T-cell (primary cell): ENCODE measurements at regions of chr3 and their contacts with region 1.

Region 1: DNA sequence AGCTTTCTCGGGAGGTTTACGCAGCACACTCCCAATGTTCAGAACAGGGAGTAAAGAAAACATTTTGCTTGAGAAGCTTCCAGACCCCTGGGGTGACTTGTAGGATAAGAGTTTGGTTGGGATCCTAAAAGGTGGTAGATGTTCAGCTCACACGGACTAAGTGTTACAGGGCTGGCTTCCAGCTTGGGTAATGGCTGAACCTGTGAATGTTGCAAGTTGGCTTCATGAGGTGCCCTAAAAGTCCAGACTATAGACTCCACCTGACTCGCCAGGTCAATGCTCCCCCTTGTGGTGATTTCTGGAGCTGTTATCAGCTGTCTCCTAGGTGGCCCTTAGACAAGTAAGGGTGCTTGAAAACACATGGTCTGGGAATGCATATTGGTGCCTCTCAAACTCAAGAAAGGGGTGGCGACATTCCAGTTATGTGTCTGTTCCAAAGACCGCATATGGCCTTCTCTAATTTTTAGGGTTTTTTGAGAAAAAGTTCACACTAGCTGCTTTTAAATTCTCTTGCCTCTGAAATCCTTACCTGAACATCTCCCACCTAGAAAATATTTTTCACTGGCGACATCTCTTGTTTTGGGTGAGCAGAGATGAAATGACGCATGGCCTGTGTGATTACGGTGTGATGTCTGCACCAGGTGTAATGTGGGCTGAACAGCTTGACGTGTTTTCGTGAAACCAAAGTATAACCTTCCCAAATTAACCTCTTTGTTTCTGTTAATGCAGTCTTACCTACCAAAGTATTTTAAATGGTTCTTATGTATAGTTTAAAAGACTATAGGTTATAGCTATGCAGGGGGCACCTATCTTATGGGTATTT is 175.7 kb upstream of the KBTBD8 start:
- DNase-seq: peak; percentile 8 to 78 (median 53)
- ATAC-seq: peak; percentile 56 to 76 (median 68)
- H3K4me3 ChIP-seq: no peak overlapping the region
- H3K4me3 Mint-ChIP-seq: no peak overlapping the region
- H3K27ac ChIP-seq: no peak overlapping the region
- H3K27ac Mint-ChIP-seq: no peak overlapping the region
- H3K4me1 ChIP-seq: no peaks in the 10 kb centered on the region
- H3K4me1 Mint-ChIP-seq: no peaks in the 10 kb centered on the region
- H3K27me3 ChIP-seq: peaks cover 0 to 3% of the 10 kb centered on the region in 2 experiments
- H3K27me3 Mint-ChIP-seq: peaks cover 0 to 6% of the 10 kb centered on the region in 2 donors

Region 2: DNA sequence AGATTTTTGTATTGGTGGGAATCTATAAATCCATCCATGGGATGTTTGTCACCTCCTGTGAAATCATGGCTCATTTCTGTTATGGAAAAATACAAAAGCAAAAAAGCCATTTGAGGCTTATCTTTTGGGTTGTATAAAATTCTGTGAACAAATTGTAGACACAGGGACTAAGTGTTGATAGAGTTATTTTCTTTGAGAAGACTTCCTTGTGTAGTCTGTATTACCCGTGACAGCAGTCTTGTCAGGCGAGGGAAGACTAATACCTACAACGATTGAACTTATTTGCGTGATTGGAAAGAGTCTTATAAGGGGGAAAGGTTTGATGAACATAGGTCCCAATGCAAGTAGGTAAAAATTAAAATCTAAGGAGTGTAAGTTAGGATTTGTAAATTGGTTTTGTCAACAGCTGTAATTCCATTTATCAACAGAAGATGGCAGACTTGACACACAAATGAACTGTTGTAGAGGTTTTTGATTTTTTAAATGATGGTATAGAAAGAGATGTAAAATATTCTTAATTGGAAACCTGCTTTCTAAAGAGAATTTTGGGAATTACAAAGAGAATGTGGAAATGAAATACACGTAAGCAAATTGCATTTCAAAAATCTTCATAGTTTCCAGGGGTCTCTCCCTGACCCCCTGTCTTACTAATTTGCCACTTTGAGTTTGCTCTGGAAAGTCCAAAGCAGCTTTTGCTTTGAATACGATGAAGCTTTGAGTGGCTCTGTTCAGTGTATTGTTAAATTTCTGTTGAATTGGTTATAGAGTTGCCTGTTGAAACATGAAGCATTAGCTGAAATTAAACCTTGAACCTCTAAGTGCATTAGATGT is 568.4 kb before region 1 on chr3:
- CTCF ChIA-PET with region 1: interaction called, 39 to 67 read pairs
- POLR2A ChIA-PET with region 1: interaction called in 1 of 2 experiments, 5 read pairs
- DNase-seq: peak in 2 of 35 experiments; percentile 13 to 65
- ATAC-seq: no peak
- H3K4me3 ChIP-seq: no peak overlapping the region
- H3K4me3 Mint-ChIP-seq: no peak overlapping the region
- H3K27ac ChIP-seq: no peak overlapping the region
- H3K27ac Mint-ChIP-seq: no peak overlapping the region
- H3K4me1 ChIP-seq: no peaks in the 10 kb centered on the region
- H3K4me1 Mint-ChIP-seq: no peaks in the 10 kb centered on the region
- H3K27me3 ChIP-seq: no peaks in the 10 kb centered on the region
- H3K27me3 Mint-ChIP-seq: no peaks in the 10 kb centered on the region

Region 3: DNA sequence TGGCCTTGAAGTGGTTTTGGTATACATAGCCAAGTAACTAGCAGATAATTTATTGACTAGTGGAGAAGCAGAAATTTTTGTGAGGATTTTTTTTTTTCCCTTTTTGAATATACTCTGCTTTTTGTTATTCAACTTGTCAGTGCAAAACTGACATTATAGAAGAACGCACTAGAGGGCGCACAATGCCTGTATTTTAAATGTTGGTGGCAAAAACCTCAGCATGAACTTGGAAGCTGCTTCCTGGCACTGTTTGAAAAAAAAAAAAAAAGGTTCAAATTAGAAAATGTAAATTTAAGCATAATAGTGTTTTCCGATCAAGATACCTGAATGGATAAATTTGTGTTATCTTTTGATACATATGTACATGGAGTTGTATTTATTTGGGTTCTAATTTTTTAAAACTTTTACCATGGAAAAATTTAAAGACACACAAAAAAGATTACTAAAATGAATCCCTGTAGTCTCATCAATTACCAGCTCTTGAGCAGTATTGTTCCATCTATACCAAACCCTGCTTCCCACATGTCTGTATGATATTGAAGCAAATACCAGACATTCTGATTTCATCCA is 545.6 kb before region 1 on chr3:
- CTCF ChIA-PET with region 1: interaction called, 8 to 11 read pairs
- POLR2A ChIA-PET with region 1: no interaction called
- DNase-seq: peak in 34 of 35 experiments; percentile 11 to 84 (median 54)
- ATAC-seq: peak in 3 of 4 experiments; percentile 40 to 61 (median 54)
- H3K4me3 ChIP-seq: no peak overlapping the region
- H3K4me3 Mint-ChIP-seq: no peak overlapping the region
- H3K27ac ChIP-seq: no peak overlapping the region
- H3K27ac Mint-ChIP-seq: peak overlapping the region; percentile 49 to 74
- H3K4me1 ChIP-seq: peaks cover 3 to 9% of the 10 kb centered on the region in 2 experiments
- H3K4me1 Mint-ChIP-seq: peaks cover 35 to 43% (median 40%) of the 10 kb centered on the region in 3 donors
- H3K27me3 ChIP-seq: no peaks in the 10 kb centered on the region
- H3K27me3 Mint-ChIP-seq: no peaks in the 10 kb centered on the region

Region 4: GRCh38 chr3:66407611-66408218 is 414.7 kb before region 1 on chr3:
- CTCF ChIA-PET with region 1: interaction called, 13 to 14 read pairs
- POLR2A ChIA-PET with region 1: no interaction called
- DNase-seq: peak; percentile 29 to 80 (median 67)
- ATAC-seq: peak; percentile 75 to 85 (median 80)
- H3K4me3 ChIP-seq: no peak overlapping the region
- H3K4me3 Mint-ChIP-seq: no peak overlapping the region
- H3K27ac ChIP-seq: no peak overlapping the region
- H3K27ac Mint-ChIP-seq: peak overlapping the region in 1 of 2 donors; percentile 15
- H3K4me1 ChIP-seq: peaks cover 0 to 8% of the 10 kb centered on the region in 2 experiments
- H3K4me1 Mint-ChIP-seq: peaks cover 0 to 3% (median 3%) of the 10 kb centered on the region in 3 donors
- H3K27me3 ChIP-seq: no peaks in the 10 kb centered on the region
- H3K27me3 Mint-ChIP-seq: no peaks in the 10 kb centered on the region